ENCODE measurements at regions of chr4 and their contacts with region 1.

Region 1: DNA sequence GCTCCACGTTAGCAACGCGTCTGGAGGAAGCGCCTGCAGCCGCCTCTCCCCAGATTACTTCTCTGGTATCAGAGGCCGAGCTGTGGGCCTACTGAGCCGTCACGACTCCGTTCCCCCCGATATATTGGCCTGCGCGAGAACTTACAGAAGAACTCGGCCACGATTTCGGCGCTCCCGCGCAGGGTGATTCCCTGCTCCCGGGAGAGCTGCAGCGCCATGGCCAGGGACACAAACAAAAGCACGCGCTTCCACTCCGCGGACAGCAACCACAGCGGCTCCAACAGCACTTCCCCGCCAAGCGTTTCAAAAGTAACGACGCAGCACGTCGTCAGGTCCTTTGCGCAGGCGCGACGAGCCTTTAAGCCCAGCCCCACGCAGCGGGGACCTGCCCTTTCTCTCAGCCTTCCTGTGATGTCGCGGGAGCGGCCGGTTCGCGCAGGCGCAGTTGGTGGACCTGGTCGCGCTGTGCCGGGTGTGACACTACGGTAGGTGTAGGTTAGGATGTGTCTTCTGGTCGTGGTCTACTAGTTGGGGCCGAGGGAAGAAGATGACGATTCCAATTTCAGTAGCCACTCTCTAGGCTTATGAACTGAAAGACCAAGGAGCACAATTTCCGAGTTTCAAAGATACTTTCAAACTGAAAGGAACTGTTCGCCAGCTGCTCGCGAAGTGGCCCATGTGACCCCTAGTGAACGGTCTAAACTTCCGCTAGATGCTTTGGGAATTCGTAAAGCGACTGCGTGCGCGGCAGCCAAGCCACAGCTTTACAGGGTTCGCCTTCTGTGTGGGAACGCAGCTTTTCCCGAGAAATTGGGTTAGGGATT is at the start of gene MAD2L1:
- DNase-seq: peak; percentile 97 to 99 (median 98)
- ATAC-seq: peak; percentile 95
- H3K4me3 ChIP-seq: peak within 1 kb of the TSS; percentile 92
- H3K4me3 Mint-ChIP-seq: peak within 1 kb of the TSS; percentile 88 to 99 (median 96)
- H3K27ac ChIP-seq: peak within 1 kb of the TSS; percentile 95
- H3K27ac Mint-ChIP-seq: peak within 1 kb of the TSS; percentile 93 to 99 (median 99)
- H3K4me1 ChIP-seq: peaks cover 24 to 33% of the 10 kb centered on the region in 2 donors
- H3K4me1 Mint-ChIP-seq: peaks cover 24 to 76% (median 66%) of the 10 kb centered on the region in 7 donors
- H3K27me3 ChIP-seq: no peaks in the 10 kb centered on the region
- H3K27me3 Mint-ChIP-seq: peaks cover 0 to 3% (median 0%) of the 10 kb centered on the region in 5 donors
- total RNA-seq, gene MAD2L1: 5.1 to 44.0 (median 7.6) TPM

Region 2: GRCh38 chr4:119212234-119212963 is 854.3 kb before region 1 on chr4 and contains the start of gene USP53:
- CTCF ChIA-PET with region 1: no interaction called
- POLR2A ChIA-PET with region 1: no interaction called
- intact Hi-C with region 1: loop called in 1 of 2 experiments (anchors 1 kb)
- DNase-seq: peak; percentile 92 to 98 (median 96)
- ATAC-seq: peak; percentile 96
- H3K4me3 ChIP-seq: peak within 1 kb of the TSS; percentile 91
- H3K4me3 Mint-ChIP-seq: peak within 1 kb of the TSS; percentile 89 to 100 (median 94)
- H3K27ac ChIP-seq: peak within 1 kb of the TSS; percentile 77
- H3K27ac Mint-ChIP-seq: peak within 1 kb of the TSS; percentile 92 to 100 (median 96)
- H3K4me1 ChIP-seq: peaks cover 0 to 10% of the 10 kb centered on the region in 2 donors
- H3K4me1 Mint-ChIP-seq: peaks cover 27 to 65% (median 39%) of the 10 kb centered on the region in 7 donors
- H3K27me3 ChIP-seq: no peaks in the 10 kb centered on the region
- H3K27me3 Mint-ChIP-seq: peaks cover 0 to 4% (median 0%) of the 10 kb centered on the region in 5 donors
- total RNA-seq, gene USP53: 7.3 to 29.8 (median 21.2) TPM

Region 3: DNA sequence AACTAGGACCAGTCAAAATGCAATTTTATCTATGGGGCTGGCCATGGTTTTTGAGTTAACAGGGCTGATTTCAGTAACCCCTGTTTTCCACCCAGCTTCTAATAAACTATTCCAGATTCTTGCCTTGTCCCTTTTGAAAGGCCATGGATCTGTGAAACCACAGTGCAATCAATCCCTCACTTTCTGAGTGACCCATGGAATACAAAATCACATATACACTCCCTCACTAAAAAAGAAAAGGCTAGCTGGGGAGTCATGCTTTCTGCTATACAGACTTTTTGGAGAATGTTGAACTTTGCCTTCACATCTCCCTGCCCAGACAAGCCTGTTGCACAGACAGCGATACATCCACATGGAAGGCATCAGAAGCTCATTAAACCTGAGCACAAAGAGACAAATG is 47.9 kb before region 1 on chr4:
- CTCF ChIA-PET with region 1: no interaction called
- POLR2A ChIA-PET with region 1: no interaction called
- intact Hi-C with region 1: no loop called
- DNase-seq: no peak
- ATAC-seq: no peak
- H3K4me3 ChIP-seq: no peak overlapping the region
- H3K4me3 Mint-ChIP-seq: no peak overlapping the region
- H3K27ac ChIP-seq: no peak overlapping the region
- H3K27ac Mint-ChIP-seq: no peak overlapping the region
- H3K4me1 ChIP-seq: no peaks in the 10 kb centered on the region
- H3K4me1 Mint-ChIP-seq: no peaks in the 10 kb centered on the region
- H3K27me3 ChIP-seq: no peaks in the 10 kb centered on the region
- H3K27me3 Mint-ChIP-seq: peaks cover 13 to 30% (median 28%) of the 10 kb centered on the region in 5 donors

Region 4: GRCh38 chr4:120156120-120156718 is 89.5 kb after region 1 on chr4:
- CTCF ChIA-PET with region 1: no interaction called
- POLR2A ChIA-PET with region 1: no interaction called
- intact Hi-C with region 1: loop called (anchors 1 kb)
- DNase-seq: peak in 7 of 9 donors; percentile 22 to 63 (median 57)
- ATAC-seq: peak; percentile 63
- H3K4me3 ChIP-seq: no peak overlapping the region
- H3K4me3 Mint-ChIP-seq: no peak overlapping the region
- H3K27ac ChIP-seq: no peak overlapping the region
- H3K27ac Mint-ChIP-seq: no peak overlapping the region
- H3K4me1 ChIP-seq: no peaks in the 10 kb centered on the region
- H3K4me1 Mint-ChIP-seq: no peaks in the 10 kb centered on the region
- H3K27me3 ChIP-seq: no peaks in the 10 kb centered on the region
- H3K27me3 Mint-ChIP-seq: peaks cover 0 to 4% (median 0%) of the 10 kb centered on the region in 5 donors

Region 5: GRCh38 chr4:121050300-121050699 is 983.6 kb after region 1 on chr4:
- CTCF ChIA-PET with region 1: no interaction called
- POLR2A ChIA-PET with region 1: no interaction called
- intact Hi-C with region 1: loop called in 1 of 2 experiments (anchors 1 kb)
- DNase-seq: peak in 6 of 9 donors; percentile 11 to 39 (median 26)
- ATAC-seq: peak; percentile 38
- H3K4me3 ChIP-seq: no peak overlapping the region
- H3K4me3 Mint-ChIP-seq: no peak overlapping the region
- H3K27ac ChIP-seq: no peak overlapping the region
- H3K27ac Mint-ChIP-seq: peak overlapping the region in 1 of 9 donors; percentile 51
- H3K4me1 ChIP-seq: no peaks in the 10 kb centered on the region
- H3K4me1 Mint-ChIP-seq: peaks cover 3 to 12% (median 5%) of the 10 kb centered on the region in 7 donors
- H3K27me3 ChIP-seq: no peaks in the 10 kb centered on the region
- H3K27me3 Mint-ChIP-seq: peaks cover 0 to 68% (median 0%) of the 10 kb centered on the region in 5 donors

Region 6: GRCh38 chr4:121307445-121308327 is 1241.0 kb after region 1 on chr4:
- CTCF ChIA-PET with region 1: no interaction called
- POLR2A ChIA-PET with region 1: no interaction called
- intact Hi-C with region 1: loop called (anchors 1 kb)
- DNase-seq: peak in 7 of 9 donors; percentile 10 to 52 (median 33)
- ATAC-seq: peak; percentile 70
- H3K4me3 ChIP-seq: no peak overlapping the region
- H3K4me3 Mint-ChIP-seq: no peak overlapping the region
- H3K27ac ChIP-seq: no peak overlapping the region
- H3K27ac Mint-ChIP-seq: peak overlapping the region in 1 of 9 donors; percentile 39
- H3K4me1 ChIP-seq: peaks cover 0 to 9% of the 10 kb centered on the region in 2 donors
- H3K4me1 Mint-ChIP-seq: peaks cover 3 to 19% (median 15%) of the 10 kb centered on the region in 7 donors
- H3K27me3 ChIP-seq: no peaks in the 10 kb centered on the region
- H3K27me3 Mint-ChIP-seq: peaks cover 0 to 17% (median 0%) of the 10 kb centered on the region in 5 donors

Region 7: GRCh38 chr4:121800961-121801714 is 1734.4 kb after region 1 on chr4 and contains the start of gene EXOSC9:
- CTCF ChIA-PET with region 1: no interaction called
- POLR2A ChIA-PET with region 1: no interaction called
- intact Hi-C with region 1: loop called in 1 of 2 experiments (anchors 1 kb)
- DNase-seq: peak; percentile 88 to 98 (median 95)
- ATAC-seq: peak; percentile 92
- H3K4me3 ChIP-seq: peak within 1 kb of the TSS; percentile 92
- H3K4me3 Mint-ChIP-seq: peak within 1 kb of the TSS; percentile 89 to 99 (median 95)
- H3K27ac ChIP-seq: peak within 1 kb of the TSS; percentile 93
- H3K27ac Mint-ChIP-seq: peak within 1 kb of the TSS; percentile 97 to 100 (median 99)
- H3K4me1 ChIP-seq: peaks cover 16 to 20% of the 10 kb centered on the region in 2 donors
- H3K4me1 Mint-ChIP-seq: peaks cover 26 to 55% (median 50%) of the 10 kb centered on the region in 7 donors
- H3K27me3 ChIP-seq: no peaks in the 10 kb centered on the region
- H3K27me3 Mint-ChIP-seq: peaks cover 0 to 2% (median 0%) of the 10 kb centered on the region in 5 donors
- total RNA-seq, gene EXOSC9: 37.5 to 55.0 (median 44.2) TPM